ENCODE measurements at regions of chr19 and their contacts with region 1.

Region 1: GRCh38 chr19:15251749-15252397 is 19.6 kb upstream of the EPHX3 start:
- DNase-seq: peak; percentile 61
- H3K4me3 ChIP-seq: no peak overlapping the region
- H3K27ac ChIP-seq: no peak overlapping the region
- H3K4me1 ChIP-seq: peaks cover 42% of the 10 kb centered on the region
- H3K27me3 ChIP-seq: no peaks in the 10 kb centered on the region
- CTCF ChIP-seq: peak; percentile 39 to 40

Region 2: GRCh38 chr19:15195371-15196334 is 56.2 kb before region 1 on chr19:
- CTCF ChIA-PET with region 1: interaction called, 11 read pairs
- dilution Hi-C with region 1: no loop called
- in situ Hi-C with region 1: no loop called
- intact Hi-C with region 1: no loop called
- DNase-seq: peak; percentile 84
- H3K4me3 ChIP-seq: peak overlapping the region; percentile 31 to 50 (median 47)
- H3K27ac ChIP-seq: no peak overlapping the region
- H3K4me1 ChIP-seq: peaks cover 14% of the 10 kb centered on the region
- H3K27me3 ChIP-seq: no peaks in the 10 kb centered on the region
- CTCF ChIP-seq: peak in 1 of 2 donors; percentile 25

Region 3: DNA sequence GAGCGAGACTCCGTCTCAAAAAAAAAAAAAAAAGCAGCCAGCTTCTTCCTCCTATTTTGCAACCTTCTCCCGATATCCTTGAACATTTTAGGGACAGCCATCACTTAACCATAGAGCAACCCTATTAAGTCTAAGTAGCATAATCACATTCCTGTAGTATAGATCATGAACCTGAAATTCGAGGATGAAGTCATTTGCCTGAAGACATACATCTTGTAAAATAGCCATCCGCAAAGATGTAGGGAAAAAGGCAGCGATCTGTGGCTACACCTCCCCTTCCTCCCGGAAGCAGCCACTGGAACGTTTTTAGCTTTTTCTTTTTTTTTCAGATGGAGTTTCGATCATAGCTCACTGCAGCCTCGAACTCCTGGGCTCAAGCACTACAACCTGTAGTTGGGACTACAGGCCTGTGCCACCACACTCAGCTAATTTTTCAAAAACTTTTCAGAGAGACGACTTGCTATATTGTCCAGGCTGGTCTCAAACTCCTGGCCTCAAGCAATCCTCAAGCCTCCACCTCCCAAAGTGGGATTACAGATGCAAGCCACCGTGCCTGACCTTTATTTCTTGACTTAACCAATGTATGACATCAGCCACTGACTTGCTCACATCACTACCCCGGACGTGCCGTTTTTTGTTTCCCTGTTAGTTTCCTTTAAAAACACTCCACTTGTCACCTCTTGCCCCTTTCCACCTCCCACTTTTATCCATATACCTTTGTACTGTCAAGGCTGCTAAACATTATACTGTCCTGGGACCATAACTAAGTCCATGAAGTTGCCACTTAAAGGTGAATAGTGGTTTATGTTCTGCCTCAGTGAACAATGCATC is 17.6 kb before region 1 on chr19:
- CTCF ChIA-PET with region 1: no interaction called
- dilution Hi-C with region 1: no loop called
- in situ Hi-C with region 1: no loop called
- intact Hi-C with region 1: no loop called
- DNase-seq: peak; percentile 53
- H3K4me3 ChIP-seq: no peak overlapping the region
- H3K27ac ChIP-seq: no peak overlapping the region
- H3K4me1 ChIP-seq: no peaks in the 10 kb centered on the region
- H3K27me3 ChIP-seq: no peaks in the 10 kb centered on the region
- CTCF ChIP-seq: no peak

Region 4: DNA sequence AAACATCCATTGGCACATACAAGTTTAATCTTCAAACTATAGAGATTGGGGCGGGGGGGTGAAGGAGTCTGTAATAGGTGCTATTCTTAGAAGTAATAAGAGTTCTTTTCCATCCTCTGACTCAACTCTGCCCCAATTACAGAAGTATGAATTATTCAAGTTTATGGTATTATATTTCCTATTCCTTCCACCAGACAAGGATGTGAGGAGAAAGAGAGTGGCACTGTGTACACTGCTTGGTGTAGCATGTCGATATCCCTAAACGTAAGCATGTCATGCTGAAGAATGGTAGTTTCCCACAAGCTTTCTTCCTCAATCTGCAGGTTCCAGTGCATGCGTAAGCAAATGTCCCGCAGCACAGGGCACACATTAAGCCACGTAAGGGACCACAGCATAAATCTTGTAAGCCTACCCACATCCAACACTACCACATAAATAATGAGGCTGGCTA is 66.4 kb after region 1 on chr19:
- CTCF ChIA-PET with region 1: no interaction called
- dilution Hi-C with region 1: no loop called
- in situ Hi-C with region 1: no loop called
- intact Hi-C with region 1: no loop called
- DNase-seq: no peak
- H3K4me3 ChIP-seq: no peak overlapping the region
- H3K27ac ChIP-seq: no peak overlapping the region
- H3K4me1 ChIP-seq: peaks cover 19% of the 10 kb centered on the region
- H3K27me3 ChIP-seq: no peaks in the 10 kb centered on the region
- CTCF ChIP-seq: no peak

Region 5: GRCh38 chr19:15684831-15685230 is 433.0 kb after region 1 on chr19:
- CTCF ChIA-PET with region 1: no interaction called
- dilution Hi-C with region 1: no loop called
- in situ Hi-C with region 1: no loop called
- intact Hi-C with region 1: no loop called
- DNase-seq: no peak
- H3K4me3 ChIP-seq: no peak overlapping the region
- H3K27ac ChIP-seq: no peak overlapping the region
- H3K4me1 ChIP-seq: no peaks in the 10 kb centered on the region
- H3K27me3 ChIP-seq: no peaks in the 10 kb centered on the region
- CTCF ChIP-seq: no peak